ENCODE measurements at regions of chr16 and their contacts with region 1.

Region 1: GRCh38 chr16:5615868-5616642 is 518.5 kb upstream of the EEF2KMT start:
- DNase-seq: peak; percentile 13 to 64 (median 38)
- ATAC-seq: peak in 3 of 4 donors; percentile 52 to 74 (median 57)
- H3K4me3 ChIP-seq: no peak overlapping the region
- H3K27ac ChIP-seq: no peak overlapping the region
- H3K4me1 ChIP-seq: no peaks in the 10 kb centered on the region
- H3K27me3 ChIP-seq: peaks cover 0 to 41% (median 8%) of the 10 kb centered on the region in 9 donors
- CTCF ChIP-seq: peak; percentile 35 to 68 (median 60)
- POLR2A ChIP-seq: no peak

Region 2: DNA sequence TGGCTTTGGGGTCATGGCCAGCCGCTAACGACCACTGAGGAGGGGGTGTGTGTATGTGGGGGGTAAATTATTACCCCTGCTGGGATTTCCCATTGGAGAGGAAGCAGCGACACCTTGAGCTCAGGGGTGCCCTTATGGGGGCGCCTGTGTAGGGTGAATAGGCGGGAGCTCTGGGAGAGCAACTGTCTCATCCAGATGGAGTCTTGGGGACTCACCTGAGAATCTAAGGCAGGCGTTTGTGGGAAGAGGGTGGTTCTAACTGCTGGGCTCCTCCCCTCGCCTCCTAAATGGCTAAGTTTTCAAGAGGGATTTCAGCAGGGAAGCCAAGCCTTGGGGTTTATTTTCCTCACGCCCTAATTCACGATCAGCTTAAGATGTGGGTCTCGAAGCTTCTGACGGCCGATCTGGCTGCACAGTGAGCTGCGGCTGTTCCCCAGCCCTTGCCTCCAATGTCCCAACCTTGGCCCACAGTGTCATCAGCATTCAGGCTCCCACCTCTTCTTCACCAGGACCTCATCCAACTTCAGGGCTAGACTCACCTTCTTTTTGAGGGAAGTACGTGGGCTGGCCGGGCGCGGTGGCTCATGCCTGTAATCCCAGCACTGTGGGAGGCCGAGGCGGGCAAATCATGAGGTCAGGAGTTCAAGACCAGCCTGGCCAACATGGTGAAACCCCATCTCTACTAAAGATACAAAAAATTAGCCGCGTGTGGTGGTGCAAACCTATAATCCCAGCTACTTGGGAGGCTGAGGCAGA is 381.6 kb before region 1 on chr16:
- intact Hi-C with region 1: loop called in 1 of 10 experiments (anchors 10 kb)
- DNase-seq: no peak
- ATAC-seq: no peak
- H3K4me3 ChIP-seq: no peak overlapping the region
- H3K27ac ChIP-seq: no peak overlapping the region
- H3K4me1 ChIP-seq: no peaks in the 10 kb centered on the region
- H3K27me3 ChIP-seq: peaks cover 0 to 25% (median 0%) of the 10 kb centered on the region in 9 donors
- CTCF ChIP-seq: no peak
- POLR2A ChIP-seq: no peak

Region 3: GRCh38 chr16:5252791-5253190 is 363.3 kb before region 1 on chr16:
- intact Hi-C with region 1: loop called in 1 of 10 experiments (anchors 10 kb)
- DNase-seq: no peak
- ATAC-seq: no peak
- H3K4me3 ChIP-seq: no peak overlapping the region
- H3K27ac ChIP-seq: no peak overlapping the region
- H3K4me1 ChIP-seq: no peaks in the 10 kb centered on the region
- H3K27me3 ChIP-seq: no peaks in the 10 kb centered on the region
- CTCF ChIP-seq: no peak
- POLR2A ChIP-seq: no peak

Region 4: GRCh38 chr16:5364186-5364585 is 251.9 kb before region 1 on chr16:
- intact Hi-C with region 1: no loop called
- DNase-seq: no peak
- ATAC-seq: no peak
- H3K4me3 ChIP-seq: no peak overlapping the region
- H3K27ac ChIP-seq: no peak overlapping the region
- H3K4me1 ChIP-seq: no peaks in the 10 kb centered on the region
- H3K27me3 ChIP-seq: no peaks in the 10 kb centered on the region
- CTCF ChIP-seq: no peak
- POLR2A ChIP-seq: no peak

Region 5: GRCh38 chr16:5502467-5502869 is 113.6 kb before region 1 on chr16:
- intact Hi-C with region 1: loop called in 2 of 10 experiments (anchors 2 to 10 kb)
- DNase-seq: no peak
- ATAC-seq: no peak
- H3K4me3 ChIP-seq: no peak overlapping the region
- H3K27ac ChIP-seq: no peak overlapping the region
- H3K4me1 ChIP-seq: peaks cover 0 to 6% (median 0%) of the 10 kb centered on the region in 12 donors
- H3K27me3 ChIP-seq: peaks cover 0 to 10% (median 0%) of the 10 kb centered on the region in 9 donors
- CTCF ChIP-seq: peak in 7 of 12 donors; percentile 8 to 40 (median 22)
- POLR2A ChIP-seq: no peak

Region 6: GRCh38 chr16:5642436-5642835 is 26.4 kb after region 1 on chr16:
- intact Hi-C with region 1: no loop called
- DNase-seq: no peak
- ATAC-seq: no peak
- H3K4me3 ChIP-seq: no peak overlapping the region
- H3K27ac ChIP-seq: no peak overlapping the region
- H3K4me1 ChIP-seq: no peaks in the 10 kb centered on the region
- H3K27me3 ChIP-seq: peaks cover 0 to 5% (median 0%) of the 10 kb centered on the region in 9 donors
- CTCF ChIP-seq: no peak
- POLR2A ChIP-seq: no peak

Region 7: GRCh38 chr16:5678371-5678770 is 62.3 kb after region 1 on chr16:
- intact Hi-C with region 1: no loop called
- DNase-seq: no peak
- ATAC-seq: no peak
- H3K4me3 ChIP-seq: no peak overlapping the region
- H3K27ac ChIP-seq: no peak overlapping the region
- H3K4me1 ChIP-seq: no peaks in the 10 kb centered on the region
- H3K27me3 ChIP-seq: peaks cover 0 to 6% (median 0%) of the 10 kb centered on the region in 9 donors
- CTCF ChIP-seq: no peak
- POLR2A ChIP-seq: no peak